B cell (primary cell): ENCODE measurements at regions of chr6 and their contacts with region 1.

Region 1: DNA sequence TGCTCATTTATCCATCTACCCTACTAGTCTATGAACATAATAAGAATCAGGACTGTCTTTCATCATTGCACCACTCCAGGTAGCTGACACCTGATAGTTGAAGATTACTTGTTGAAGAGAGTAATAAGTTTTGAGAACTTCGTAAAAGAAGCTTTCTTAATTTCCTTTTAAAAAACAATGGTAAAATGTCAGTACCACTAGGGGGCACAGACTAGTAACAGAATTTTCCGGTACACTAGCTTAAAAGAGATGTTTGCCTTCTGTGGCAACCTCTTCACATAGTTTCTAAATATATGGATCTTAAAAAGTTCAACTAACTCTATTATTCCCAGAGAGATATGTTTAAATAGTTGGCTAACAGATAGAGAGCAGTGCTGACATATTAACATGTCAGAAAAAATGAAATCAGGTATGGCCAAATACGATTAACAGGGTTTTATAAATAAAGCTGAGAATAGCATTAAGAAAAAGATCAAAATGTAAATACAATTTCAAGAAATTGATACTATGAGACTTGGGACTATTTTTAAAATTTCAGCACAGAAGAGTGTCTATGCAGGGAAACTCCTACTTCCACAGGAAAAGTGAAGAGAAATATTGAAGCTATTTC is 5.4 kb upstream of the KCNQ5 start:
- DNase-seq: peak; percentile 62
- ATAC-seq: no peak
- H3K4me3 ChIP-seq: no peak overlapping the region
- H3K4me3 Mint-ChIP-seq: no peak overlapping the region
- H3K27ac ChIP-seq: no peak overlapping the region
- H3K27ac Mint-ChIP-seq: no peak overlapping the region
- H3K4me1 ChIP-seq: peaks cover 11 to 17% of the 10 kb centered on the region in 2 donors
- H3K4me1 Mint-ChIP-seq: peaks cover 22% of the 10 kb centered on the region
- H3K27me3 ChIP-seq: no peaks in the 10 kb centered on the region
- H3K27me3 Mint-ChIP-seq: no peaks in the 10 kb centered on the region
- CTCF ChIP-seq: peak; percentile 87

Region 2: DNA sequence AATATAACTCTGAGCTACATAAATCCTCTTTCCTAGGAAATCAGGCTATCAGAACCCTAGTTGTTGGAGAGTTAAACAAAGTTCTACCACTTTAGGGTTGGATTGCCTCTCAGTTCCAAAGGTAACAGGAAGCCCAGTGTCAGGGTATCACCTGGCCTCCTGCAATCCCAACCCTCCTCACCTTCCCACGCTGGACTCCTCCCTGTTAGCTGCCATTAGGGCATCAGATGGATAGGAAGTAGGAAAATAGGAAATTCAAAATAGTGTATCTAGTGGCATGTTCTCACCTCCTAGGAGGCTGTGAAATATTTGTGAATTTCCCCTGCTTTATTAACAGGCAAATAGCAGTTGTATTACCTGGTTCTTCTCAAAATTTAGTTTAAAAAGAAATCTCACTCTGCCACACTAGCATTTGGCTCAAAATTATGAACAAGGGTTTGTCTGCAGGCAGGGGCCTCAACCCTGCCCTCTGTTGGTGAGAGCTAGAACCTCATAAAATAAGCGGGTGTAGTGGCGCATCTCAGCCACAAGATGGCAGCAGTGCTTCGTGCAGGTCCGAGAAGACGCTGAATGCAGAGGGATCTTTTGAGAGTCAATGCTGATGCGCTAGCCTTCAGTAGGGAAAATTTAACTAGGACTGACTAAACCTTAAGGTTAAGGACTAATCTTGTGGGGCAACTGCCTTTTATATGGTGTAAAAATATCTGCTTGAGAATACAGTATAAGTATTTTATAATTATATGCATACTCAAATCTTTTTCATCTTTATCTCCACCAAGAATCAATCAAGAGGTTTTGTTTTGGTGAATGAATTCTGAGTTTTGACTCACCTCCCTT is 204.4 kb before region 1 on chr6:
- CTCF ChIA-PET with region 1: interaction called, 21 read pairs
- POLR2A ChIA-PET with region 1: no interaction called
- intact Hi-C with region 1: loop called (anchors 2 kb)
- DNase-seq: peak; percentile 91
- ATAC-seq: peak; percentile 100
- H3K4me3 ChIP-seq: no peak overlapping the region
- H3K4me3 Mint-ChIP-seq: no peak overlapping the region
- H3K27ac ChIP-seq: no peak overlapping the region
- H3K27ac Mint-ChIP-seq: no peak overlapping the region
- H3K4me1 ChIP-seq: no peaks in the 10 kb centered on the region
- H3K4me1 Mint-ChIP-seq: peaks cover 5% of the 10 kb centered on the region
- H3K27me3 ChIP-seq: peaks cover 0 to 3% (median 1%) of the 10 kb centered on the region in 4 experiments
- H3K27me3 Mint-ChIP-seq: peaks cover 17% of the 10 kb centered on the region
- CTCF ChIP-seq: peak; percentile 100

Region 3: DNA sequence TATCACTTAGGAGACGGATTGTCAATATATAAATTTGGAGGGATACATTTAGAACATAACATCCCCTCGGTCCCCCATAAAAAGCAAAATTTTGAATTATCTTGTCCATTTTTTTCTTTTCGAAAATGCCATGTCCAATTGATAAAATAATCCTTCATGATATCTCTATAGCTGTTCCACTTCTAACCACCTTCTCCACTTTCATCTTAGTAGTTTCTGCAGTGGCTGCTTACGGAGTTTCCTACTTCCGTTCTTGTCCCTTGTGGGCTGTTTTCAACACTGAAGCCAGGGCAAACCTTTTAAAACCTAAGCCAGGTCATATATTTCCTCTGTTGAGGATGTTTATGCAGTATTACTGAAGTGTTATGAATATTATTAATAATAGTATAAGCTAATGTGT is 43.2 kb after region 1 on chr6:
- CTCF ChIA-PET with region 1: interaction called, 10 read pairs
- POLR2A ChIA-PET with region 1: no interaction called
- intact Hi-C with region 1: no loop called
- DNase-seq: no peak
- ATAC-seq: no peak
- H3K4me3 ChIP-seq: no peak overlapping the region
- H3K4me3 Mint-ChIP-seq: no peak overlapping the region
- H3K27ac ChIP-seq: no peak overlapping the region
- H3K27ac Mint-ChIP-seq: no peak overlapping the region
- H3K4me1 ChIP-seq: no peaks in the 10 kb centered on the region
- H3K4me1 Mint-ChIP-seq: no peaks in the 10 kb centered on the region
- H3K27me3 ChIP-seq: no peaks in the 10 kb centered on the region
- H3K27me3 Mint-ChIP-seq: no peaks in the 10 kb centered on the region
- CTCF ChIP-seq: no peak

Region 4: DNA sequence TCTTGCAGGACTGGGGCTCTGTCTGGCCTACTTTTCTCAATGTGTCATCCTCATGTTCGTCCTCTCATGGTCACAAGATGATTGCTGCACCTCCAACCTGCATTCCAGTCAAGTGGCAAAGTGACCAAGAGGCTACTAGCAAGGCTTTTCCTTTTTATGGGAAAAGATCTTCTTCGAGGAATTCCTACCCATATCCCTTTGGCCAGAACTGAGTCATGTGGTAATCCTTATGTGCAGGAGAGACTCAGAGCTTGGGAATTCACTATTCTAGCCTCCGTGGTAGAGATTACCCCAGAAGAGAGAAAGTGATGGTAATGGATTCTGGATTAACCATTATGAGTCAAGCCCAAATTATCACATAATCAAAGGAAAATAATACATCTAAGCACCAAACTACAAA is 168.1 kb after region 1 on chr6:
- CTCF ChIA-PET with region 1: no interaction called
- POLR2A ChIA-PET with region 1: no interaction called
- intact Hi-C with region 1: no loop called
- DNase-seq: no peak
- ATAC-seq: no peak
- H3K4me3 ChIP-seq: no peak overlapping the region
- H3K4me3 Mint-ChIP-seq: no peak overlapping the region
- H3K27ac ChIP-seq: no peak overlapping the region
- H3K27ac Mint-ChIP-seq: no peak overlapping the region
- H3K4me1 ChIP-seq: no peaks in the 10 kb centered on the region
- H3K4me1 Mint-ChIP-seq: no peaks in the 10 kb centered on the region
- H3K27me3 ChIP-seq: no peaks in the 10 kb centered on the region
- H3K27me3 Mint-ChIP-seq: no peaks in the 10 kb centered on the region
- CTCF ChIP-seq: no peak

Region 5: GRCh38 chr6:73121421-73121993 is 505.0 kb after region 1 on chr6:
- CTCF ChIA-PET with region 1: interaction called, 586 read pairs
- POLR2A ChIA-PET with region 1: no interaction called
- intact Hi-C with region 1: no loop called
- DNase-seq: no peak
- ATAC-seq: no peak
- H3K4me3 ChIP-seq: no peak overlapping the region
- H3K4me3 Mint-ChIP-seq: no peak overlapping the region
- H3K27ac ChIP-seq: no peak overlapping the region
- H3K27ac Mint-ChIP-seq: no peak overlapping the region
- H3K4me1 ChIP-seq: no peaks in the 10 kb centered on the region
- H3K4me1 Mint-ChIP-seq: no peaks in the 10 kb centered on the region
- H3K27me3 ChIP-seq: no peaks in the 10 kb centered on the region
- H3K27me3 Mint-ChIP-seq: no peaks in the 10 kb centered on the region
- CTCF ChIP-seq: no peak

Region 6: DNA sequence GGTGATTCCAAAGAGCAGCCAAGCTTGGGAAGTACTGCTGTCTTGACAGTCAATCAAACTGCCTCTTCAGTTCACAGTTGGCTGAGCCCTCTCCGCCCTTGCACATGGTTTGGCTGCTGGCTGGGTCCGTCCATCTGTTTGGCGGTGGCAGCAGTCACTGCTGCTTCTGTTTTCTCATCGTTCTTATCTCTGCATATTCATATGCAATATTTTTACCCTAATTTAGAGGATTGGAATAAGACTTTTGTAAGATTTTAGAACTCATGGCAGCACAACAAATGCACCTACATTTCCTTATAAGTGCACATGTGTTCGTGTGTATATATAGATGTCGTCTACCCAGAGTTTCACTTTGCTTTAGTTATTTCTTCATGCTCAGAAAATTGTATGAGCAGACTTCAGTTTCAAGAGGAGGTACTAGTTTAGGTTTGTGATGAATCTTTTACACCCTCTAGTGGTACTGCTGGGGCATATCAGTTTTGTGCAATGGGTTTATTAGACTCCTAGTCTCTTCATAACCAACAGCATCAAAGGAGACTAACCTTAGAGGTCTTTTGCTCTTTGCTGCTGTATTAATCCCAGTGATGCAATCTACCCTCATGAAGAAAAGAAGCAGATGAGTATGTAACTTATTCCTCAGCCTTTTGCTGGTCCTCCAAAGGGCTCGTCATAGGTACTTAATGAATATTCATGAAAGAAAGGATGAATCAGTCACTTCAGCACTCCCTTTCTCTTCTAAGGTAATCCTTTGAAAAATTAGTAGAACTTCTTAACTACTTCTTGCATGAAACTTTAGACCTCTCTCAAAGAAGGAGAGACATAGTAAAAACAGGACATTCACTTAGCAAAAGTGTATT is 564.5 kb after region 1 on chr6:
- CTCF ChIA-PET with region 1: interaction called, 53 read pairs
- POLR2A ChIA-PET with region 1: no interaction called
- intact Hi-C with region 1: loop called (anchors 1 kb)
- DNase-seq: peak; percentile 76
- ATAC-seq: peak; percentile 90
- H3K4me3 ChIP-seq: peak overlapping the region in 4 of 5 experiments; percentile 11 to 54 (median 46)
- H3K4me3 Mint-ChIP-seq: peak overlapping the region; percentile 88
- H3K27ac ChIP-seq: no peak overlapping the region
- H3K27ac Mint-ChIP-seq: peak overlapping the region; percentile 43
- H3K4me1 ChIP-seq: peaks cover 23 to 25% of the 10 kb centered on the region in 2 donors
- H3K4me1 Mint-ChIP-seq: peaks cover 12% of the 10 kb centered on the region
- H3K27me3 ChIP-seq: no peaks in the 10 kb centered on the region
- H3K27me3 Mint-ChIP-seq: no peaks in the 10 kb centered on the region
- CTCF ChIP-seq: peak; percentile 95